Calu3 (cell line): ENCODE measurements at regions of chr2 and their contacts with region 1.

Region 1: GRCh38 chr2:217713395-217714286 is 289.2 kb downstream of the TNS1 start:
- DNase-seq: peak; percentile 92
- H3K4me3 Mint-ChIP-seq: peak overlapping the region; percentile 14
- H3K27ac Mint-ChIP-seq: peak overlapping the region; percentile 85
- H3K4me1 Mint-ChIP-seq: peaks cover 31% of the 10 kb centered on the region
- H3K27me3 Mint-ChIP-seq: no peaks in the 10 kb centered on the region
- CTCF ChIP-seq: peak; percentile 97

Region 2: DNA sequence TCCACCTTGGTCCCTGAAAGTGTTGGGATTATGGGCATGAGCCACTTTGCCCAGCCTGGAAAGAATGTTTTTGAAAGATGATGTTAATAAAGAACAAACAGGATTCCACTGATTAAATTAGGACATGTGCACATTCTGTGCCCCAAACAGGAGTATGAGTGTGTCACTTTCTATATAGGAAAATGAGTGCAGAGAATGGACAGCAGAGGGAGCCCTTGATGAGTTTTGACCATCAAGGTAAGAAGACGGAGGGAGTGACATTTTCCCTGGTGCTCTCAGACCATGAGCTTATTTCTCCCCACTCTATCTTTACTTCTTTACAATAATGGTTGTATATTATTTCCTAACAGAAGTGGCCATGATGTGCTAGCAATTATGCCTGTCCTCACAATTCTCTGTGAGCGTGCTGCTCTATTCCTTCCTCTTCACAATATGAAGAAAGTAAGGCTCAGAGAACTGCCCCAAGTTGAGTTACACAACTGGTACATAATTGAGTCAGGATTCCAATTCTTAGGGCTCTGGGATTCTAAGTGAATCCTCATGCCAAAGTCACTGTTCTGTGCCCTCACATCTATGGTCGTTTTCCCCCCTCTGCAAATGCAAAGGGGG is 1194.4 kb before region 1 on chr2:
- CTCF ChIA-PET with region 1: interaction called, 3 read pairs
- intact Hi-C with region 1: loop called (anchors 5 kb)
- DNase-seq: peak; percentile 76
- H3K4me3 Mint-ChIP-seq: no peak overlapping the region
- H3K27ac Mint-ChIP-seq: no peak overlapping the region
- H3K4me1 Mint-ChIP-seq: no peaks in the 10 kb centered on the region
- H3K27me3 Mint-ChIP-seq: no peaks in the 10 kb centered on the region
- CTCF ChIP-seq: peak; percentile 50

Region 3: DNA sequence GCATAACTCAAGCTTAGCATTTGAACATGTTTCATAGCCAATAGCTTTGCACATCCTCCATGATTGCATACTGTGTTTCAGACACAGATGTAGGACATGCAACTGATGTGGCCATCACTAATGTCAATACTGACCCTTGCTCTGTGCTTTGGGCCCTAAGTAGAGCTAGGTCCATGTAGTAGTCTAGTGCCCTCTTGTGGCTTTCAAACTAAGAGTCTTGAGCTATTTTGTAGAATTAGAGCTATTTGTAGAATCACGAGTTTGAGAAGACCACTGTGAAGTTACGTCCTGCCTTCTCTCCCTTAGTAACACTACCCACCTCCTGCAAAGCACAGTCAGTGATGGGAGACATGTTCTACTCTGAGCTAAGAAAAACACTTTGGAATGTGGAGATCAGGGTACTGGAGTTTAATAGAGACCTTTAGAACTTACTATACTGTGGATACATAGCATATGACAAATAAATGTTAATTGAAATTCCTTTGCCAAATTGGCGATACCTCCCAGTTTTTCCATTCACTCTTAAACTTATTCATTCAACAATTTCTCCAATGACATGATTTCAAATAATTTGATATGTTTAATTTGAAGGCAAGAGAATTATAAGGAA is 547.3 kb before region 1 on chr2:
- CTCF ChIA-PET with region 1: interaction called, 4 read pairs
- intact Hi-C with region 1: loop called (anchors 10 kb)
- DNase-seq: peak; percentile 25
- H3K4me3 Mint-ChIP-seq: no peak overlapping the region
- H3K27ac Mint-ChIP-seq: peak overlapping the region; percentile 47
- H3K4me1 Mint-ChIP-seq: peaks cover 31% of the 10 kb centered on the region
- H3K27me3 Mint-ChIP-seq: no peaks in the 10 kb centered on the region
- CTCF ChIP-seq: peak; percentile 43

Region 4: GRCh38 chr2:217325821-217326539 is 387.7 kb before region 1 on chr2:
- CTCF ChIA-PET with region 1: no interaction called
- intact Hi-C with region 1: loop called (anchors 5 kb)
- DNase-seq: no peak
- H3K4me3 Mint-ChIP-seq: no peak overlapping the region
- H3K27ac Mint-ChIP-seq: peak overlapping the region; percentile 20
- H3K4me1 Mint-ChIP-seq: peaks cover 49% of the 10 kb centered on the region
- H3K27me3 Mint-ChIP-seq: no peaks in the 10 kb centered on the region
- CTCF ChIP-seq: no peak

Region 5: GRCh38 chr2:217650716-217651360 is 62.8 kb before region 1 on chr2:
- CTCF ChIA-PET with region 1: interaction called, 23 read pairs
- intact Hi-C with region 1: loop called (anchors 1 kb)
- DNase-seq: peak; percentile 74
- H3K4me3 Mint-ChIP-seq: peak overlapping the region; percentile 2
- H3K27ac Mint-ChIP-seq: peak overlapping the region; percentile 40
- H3K4me1 Mint-ChIP-seq: peaks cover 40% of the 10 kb centered on the region
- H3K27me3 Mint-ChIP-seq: peaks cover under 1% of the 10 kb centered on the region
- CTCF ChIP-seq: peak; percentile 74